Naive thymus-derived CD4-positive, alpha-beta T cell (primary cell): ENCODE measurements at regions of chr17 and their contacts with region 1.

Region 1: GRCh38 chr17:48429638-48430586 is at the start of gene SKAP1:
- DNase-seq: peak; percentile 52 to 80 (median 62)
- ATAC-seq: peak; percentile 84
- H3K4me3 ChIP-seq: peak within 1 kb of the TSS; percentile 92
- H3K4me3 Mint-ChIP-seq: peak within 1 kb of the TSS; percentile 90 to 100 (median 98)
- H3K27ac ChIP-seq: peak within 1 kb of the TSS; percentile 97
- H3K27ac Mint-ChIP-seq: peak within 1 kb of the TSS; percentile 91 to 99 (median 98)
- H3K4me1 ChIP-seq: peaks cover 36 to 58% of the 10 kb centered on the region in 2 donors
- H3K4me1 Mint-ChIP-seq: peaks cover 50 to 93% (median 82%) of the 10 kb centered on the region in 7 donors
- H3K27me3 ChIP-seq: no peaks in the 10 kb centered on the region
- H3K27me3 Mint-ChIP-seq: no peaks in the 10 kb centered on the region
- total RNA-seq, gene SKAP1: 99.3 to 117 (median 109) TPM

Region 2: GRCh38 chr17:48386826-48387225 is 43.1 kb before region 1 on chr17:
- CTCF ChIA-PET with region 1: interaction called, 3 read pairs
- POLR2A ChIA-PET with region 1: no interaction called
- intact Hi-C with region 1: loop called in 1 of 2 experiments (anchors 1 kb)
- DNase-seq: no peak
- ATAC-seq: no peak
- H3K4me3 ChIP-seq: no peak overlapping the region
- H3K4me3 Mint-ChIP-seq: peak overlapping the region in 2 of 10 donors; percentile 0 to 42
- H3K27ac ChIP-seq: no peak overlapping the region
- H3K27ac Mint-ChIP-seq: no peak overlapping the region
- H3K4me1 ChIP-seq: peaks cover 4 to 10% of the 10 kb centered on the region in 2 donors
- H3K4me1 Mint-ChIP-seq: peaks cover 22 to 89% (median 73%) of the 10 kb centered on the region in 7 donors
- H3K27me3 ChIP-seq: no peaks in the 10 kb centered on the region
- H3K27me3 Mint-ChIP-seq: no peaks in the 10 kb centered on the region

Region 3: DNA sequence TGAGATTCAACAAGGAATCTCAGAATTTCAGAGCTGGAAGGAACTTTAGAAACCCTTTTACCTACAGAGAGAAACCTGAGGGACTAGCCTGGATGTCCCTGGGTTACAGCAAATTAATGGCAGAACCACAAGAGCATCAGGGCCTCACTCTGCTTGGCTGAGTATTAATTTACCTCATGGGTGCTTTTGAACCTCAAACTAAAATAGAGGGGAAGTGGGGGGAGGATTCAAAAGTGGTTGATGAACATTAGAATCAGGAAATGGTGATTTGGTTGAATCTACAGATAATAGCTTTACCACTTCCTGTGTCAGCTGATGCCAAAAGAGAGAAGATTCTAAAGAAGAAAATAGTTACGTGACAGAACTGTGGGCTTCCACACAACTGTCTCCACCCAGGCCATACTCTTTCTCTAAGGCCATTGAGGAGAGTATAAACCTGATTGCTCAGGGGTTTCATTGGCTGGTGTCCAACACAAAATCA is 11.4 kb after region 1 on chr17:
- CTCF ChIA-PET with region 1: interaction called, 5 read pairs
- POLR2A ChIA-PET with region 1: interaction called, 36 read pairs
- intact Hi-C with region 1: loop called (anchors 1 kb)
- DNase-seq: peak in 7 of 9 donors; percentile 74 to 88 (median 86)
- ATAC-seq: peak; percentile 80
- H3K4me3 ChIP-seq: peak overlapping the region; percentile 28
- H3K4me3 Mint-ChIP-seq: peak overlapping the region; percentile 61 to 86 (median 76)
- H3K27ac ChIP-seq: peak overlapping the region; percentile 63
- H3K27ac Mint-ChIP-seq: peak overlapping the region; percentile 69 to 96 (median 95)
- H3K4me1 ChIP-seq: peaks cover 93 to 95% of the 10 kb centered on the region in 2 donors
- H3K4me1 Mint-ChIP-seq: peaks cover 80 to 97% (median 94%) of the 10 kb centered on the region in 7 donors
- H3K27me3 ChIP-seq: no peaks in the 10 kb centered on the region
- H3K27me3 Mint-ChIP-seq: no peaks in the 10 kb centered on the region